K562 (cell line): ENCODE measurements at regions of chr17 and their contacts with region 1.

Region 1: GRCh38 chr17:6473128-6473767 is 29.0 kb downstream of the PIMREG start:
- DNase-seq: peak; percentile 71 to 78 (median 75)
- ATAC-seq: peak; percentile 88
- H3K4me3 ChIP-seq: no peak overlapping the region
- H3K27ac ChIP-seq: no peak overlapping the region
- H3K4me1 ChIP-seq: peaks cover 8 to 11% of the 10 kb centered on the region in 2 experiments; a peak in 4 of 5 replicates
- H3K27me3 ChIP-seq: no peaks in the 10 kb centered on the region; a peak in 1 of 5 replicates
- CTCF ChIP-seq: peak; percentile 70 to 90 (median 76)
- EP300 ChIP-seq: no peak
- POLR2A ChIP-seq: no peak
- RAD21 ChIP-seq: peak; percentile 55 to 68

Region 2: DNA sequence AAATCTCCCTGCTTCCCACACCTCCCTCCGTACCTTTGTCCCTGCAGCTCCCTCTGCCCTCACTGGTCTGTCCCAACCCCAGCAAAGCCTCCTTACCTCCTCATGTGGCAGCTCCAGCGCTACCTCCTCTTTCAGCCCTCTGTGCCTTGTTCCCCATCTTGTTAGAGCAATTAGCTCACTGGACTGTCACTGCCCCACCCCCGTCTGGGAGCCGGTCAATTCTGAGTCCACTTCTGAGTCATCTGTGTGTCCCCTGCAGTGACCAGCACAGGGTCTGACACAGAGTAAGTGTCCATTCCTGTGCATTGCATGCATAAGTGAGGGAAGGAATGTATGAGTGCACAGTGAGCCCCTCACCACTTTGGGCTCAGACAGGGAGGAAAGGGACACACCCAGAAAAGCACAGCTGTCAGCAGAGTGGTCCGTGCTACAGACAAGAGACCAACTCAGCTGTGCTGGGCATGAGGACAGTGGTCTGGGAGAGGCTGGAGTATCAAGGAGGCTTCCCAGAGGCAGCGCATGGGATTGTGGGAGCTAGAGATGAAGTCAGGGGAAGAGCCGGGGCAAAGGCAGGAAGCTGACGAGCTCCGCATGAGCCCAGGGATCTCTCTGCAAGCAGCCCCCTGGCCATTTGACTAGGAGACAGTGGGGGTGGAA is 37.2 kb after region 1 on chr17:
- CTCF ChIA-PET with region 1: no interaction called
- POLR2A ChIA-PET with region 1: no interaction called
- in situ Hi-C with region 1: loop called (anchors 5 kb)
- intact Hi-C with region 1: no loop called
- DNase-seq: peak in 1 of 4 experiments; percentile 13
- ATAC-seq: no peak
- H3K4me3 ChIP-seq: no peak overlapping the region
- H3K27ac ChIP-seq: no peak overlapping the region
- H3K4me1 ChIP-seq: peaks cover 0 to 4% of the 10 kb centered on the region in 2 experiments; a peak in 3 of 5 replicates
- H3K27me3 ChIP-seq: peaks cover 0 to 31% of the 10 kb centered on the region in 2 experiments; a peak in 3 of 5 replicates
- CTCF ChIP-seq: no peak
- EP300 ChIP-seq: no peak
- POLR2A ChIP-seq: no peak
- RAD21 ChIP-seq: no peak

Region 3: DNA sequence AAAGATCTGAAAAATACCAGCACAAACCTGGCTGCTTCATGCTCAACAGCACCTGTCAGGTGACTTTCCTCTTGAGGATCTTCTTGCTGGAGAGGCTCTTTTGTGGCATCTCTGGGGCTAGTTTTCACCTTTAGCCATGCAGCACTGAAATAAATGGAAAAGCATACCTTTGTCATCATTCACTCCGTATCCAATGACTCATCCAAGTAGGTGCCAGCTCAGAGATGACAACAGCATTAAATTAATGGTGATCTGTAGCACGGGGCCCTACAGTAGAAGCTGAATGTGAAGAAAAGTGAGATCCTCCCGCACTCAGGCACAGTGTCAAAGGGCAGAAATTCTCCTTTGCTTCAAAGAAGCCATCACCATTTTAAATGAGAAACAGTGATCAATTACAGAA is 135.1 kb after region 1 on chr17:
- CTCF ChIA-PET with region 1: no interaction called
- POLR2A ChIA-PET with region 1: no interaction called
- in situ Hi-C with region 1: no loop called
- intact Hi-C with region 1: no loop called
- DNase-seq: no peak
- ATAC-seq: no peak
- H3K4me3 ChIP-seq: no peak overlapping the region
- H3K27ac ChIP-seq: no peak overlapping the region
- H3K4me1 ChIP-seq: no peaks in the 10 kb centered on the region
- H3K27me3 ChIP-seq: no peaks in the 10 kb centered on the region
- CTCF ChIP-seq: no peak
- EP300 ChIP-seq: no peak
- POLR2A ChIP-seq: no peak
- RAD21 ChIP-seq: no peak